ENCODE measurements at regions of chr20 and their contacts with region 1.

Region 1: DNA sequence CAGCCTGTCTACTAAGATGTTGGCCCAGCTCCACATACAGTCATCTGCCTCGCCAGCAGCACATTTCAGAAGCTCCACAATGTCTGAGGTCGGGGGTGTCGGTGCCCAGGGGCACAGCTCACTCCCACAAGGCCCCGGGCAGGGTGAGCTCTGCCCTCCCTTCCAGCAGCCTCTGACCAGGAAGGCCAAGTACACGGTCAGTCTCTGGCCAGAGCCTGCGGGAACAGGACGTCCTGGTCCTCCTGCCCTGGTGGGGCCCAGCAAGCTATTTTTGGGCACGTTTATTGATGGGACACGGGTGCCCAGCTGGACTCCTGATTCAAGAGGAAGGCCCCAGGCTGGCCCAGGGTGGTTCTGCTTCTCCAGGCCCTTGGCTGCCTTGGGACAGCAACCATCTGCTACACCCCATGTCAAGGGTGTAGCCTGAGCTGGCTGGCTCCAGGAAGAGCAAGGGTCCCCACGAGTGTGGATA is 114.9 kb upstream of the PTPN1 start:
- DNase-seq: peak; percentile 92
- ATAC-seq: peak; percentile 82

Region 2: DNA sequence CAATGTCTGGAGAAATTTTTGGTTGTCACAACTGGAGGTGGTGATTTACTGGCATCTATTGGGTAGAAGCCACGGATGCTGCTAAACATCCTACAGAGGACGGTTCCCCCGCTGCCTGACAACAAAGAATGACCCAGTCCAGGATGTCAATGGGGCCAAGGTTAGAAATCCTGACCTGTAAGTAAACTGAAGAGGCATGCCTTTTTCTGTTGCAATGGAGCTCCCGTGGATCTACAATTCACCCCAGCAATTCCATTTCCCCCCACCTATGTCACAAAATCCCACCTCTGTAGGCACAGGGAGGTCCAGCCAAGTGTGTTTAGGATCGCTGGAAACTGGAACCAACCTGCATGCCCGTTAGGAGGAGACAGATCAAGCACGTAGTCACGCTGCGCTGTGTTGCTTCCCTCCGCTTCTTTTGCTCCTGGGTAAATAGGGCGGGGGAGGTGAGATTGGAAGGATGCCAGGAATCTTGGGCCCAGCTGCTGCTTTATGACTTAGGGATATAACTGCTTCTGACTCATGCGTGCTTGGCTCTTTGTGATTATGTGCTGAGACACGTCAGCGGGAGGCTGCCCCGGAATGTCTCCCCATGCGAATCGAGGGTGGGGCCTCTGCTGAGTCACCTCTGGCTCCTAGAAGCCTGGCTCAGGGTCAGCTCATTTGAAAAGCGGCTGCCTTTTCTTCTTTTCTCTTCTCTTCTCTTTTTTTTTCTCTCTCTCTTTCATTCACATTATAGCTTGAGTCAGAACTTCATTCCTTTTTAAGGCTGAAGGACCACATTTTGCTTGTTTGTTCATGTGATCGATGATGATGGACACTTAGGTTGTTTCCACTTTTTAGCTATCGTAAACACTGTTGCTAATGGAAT is 229.4 kb before region 1 on chr20:
- intact Hi-C with region 1: no loop called
- DNase-seq: peak; percentile 97
- ATAC-seq: peak; percentile 96

Region 3: DNA sequence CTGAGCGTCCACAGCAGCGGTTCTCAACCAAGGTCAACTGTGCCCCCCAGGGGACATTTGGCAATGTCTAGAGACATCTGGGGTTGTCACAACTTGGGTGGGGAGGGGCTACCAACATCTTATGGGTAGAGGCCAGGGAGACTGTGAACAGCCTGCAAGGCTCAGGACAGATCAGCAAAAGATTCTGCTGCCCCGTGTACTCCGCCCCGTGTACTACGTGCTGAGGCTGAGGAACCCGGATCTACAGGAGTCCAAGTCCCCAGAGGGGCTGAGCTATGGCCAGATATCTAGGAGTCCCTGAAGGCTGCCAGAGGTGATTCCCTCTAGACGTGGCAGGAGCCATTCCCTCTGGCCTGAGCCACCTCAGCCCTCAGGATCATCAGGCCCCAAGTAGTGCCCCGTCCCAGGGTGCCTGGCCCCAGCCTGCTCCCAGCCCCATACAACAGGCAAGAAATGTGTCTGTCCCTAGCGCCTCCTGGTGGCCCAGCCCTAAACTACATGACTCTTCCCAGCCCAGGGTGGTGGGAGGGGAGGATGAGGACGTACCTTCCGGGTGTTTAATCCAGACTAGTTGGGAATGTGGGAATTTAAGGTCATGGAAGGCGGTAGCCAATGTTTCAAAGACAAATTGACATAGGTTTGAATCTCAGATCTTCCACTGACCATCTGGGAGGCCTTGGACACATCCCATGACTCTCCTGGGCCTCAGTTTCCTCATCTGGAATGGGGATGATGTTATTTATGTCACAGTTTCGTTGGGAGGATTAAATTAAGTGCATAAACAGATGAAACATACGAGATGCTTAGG is 65.4 kb after region 1 on chr20:
- intact Hi-C with region 1: loop called (anchors 5 kb)
- DNase-seq: peak; percentile 94
- ATAC-seq: peak; percentile 92

Region 4: DNA sequence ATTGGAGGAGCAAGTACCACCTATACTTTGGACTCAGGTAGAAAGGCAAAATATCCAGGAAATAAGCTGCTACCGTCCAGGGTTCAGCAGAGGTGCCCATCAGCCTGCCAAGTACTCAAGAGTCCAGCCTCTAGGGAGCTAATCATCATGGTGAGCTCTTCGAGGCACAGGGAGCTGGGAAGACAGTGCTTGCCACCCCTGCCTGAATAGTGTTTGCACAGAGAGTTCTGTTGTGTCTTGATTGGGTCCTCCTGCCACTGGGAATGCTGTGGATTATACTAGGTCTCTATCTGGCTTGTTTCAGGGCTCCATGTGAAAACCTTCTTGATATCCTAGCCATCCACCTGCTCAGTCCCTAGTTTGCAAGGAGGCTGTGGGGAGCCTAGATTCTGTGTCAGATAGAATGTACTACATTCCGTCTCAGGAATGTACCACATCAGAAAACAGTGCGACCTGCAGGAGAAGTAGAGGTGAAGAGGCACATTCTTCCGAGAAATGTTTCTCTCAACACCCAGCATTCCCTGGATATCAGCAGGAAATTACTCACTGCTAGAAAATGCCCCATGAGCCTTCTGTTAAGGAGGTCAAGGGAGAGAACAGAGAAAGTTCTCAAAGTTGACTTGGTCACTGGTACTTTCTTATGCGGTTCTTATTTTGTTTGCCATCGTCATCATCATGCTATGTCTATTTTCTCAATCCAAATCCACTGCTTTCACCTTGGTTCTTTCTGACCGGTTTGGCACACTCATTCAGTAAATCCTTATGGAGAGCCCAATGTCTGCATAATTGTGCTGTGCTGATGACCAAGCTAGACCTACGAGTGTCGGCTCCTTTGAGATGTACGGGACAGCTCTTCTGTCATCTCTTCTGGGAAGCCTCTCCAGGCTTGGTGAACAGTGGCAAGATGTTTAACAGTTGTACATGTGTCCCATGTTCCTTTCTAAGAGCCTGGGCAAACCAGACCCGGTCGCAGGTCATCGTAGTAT is 145.6 kb after region 1 on chr20:
- intact Hi-C with region 1: no loop called
- DNase-seq: no peak
- ATAC-seq: peak; percentile 50